Head of caudate nucleus (tissue), 42 donors: ENCODE measurements at regions of chr22 and their contacts with region 1.

Region 1: GRCh38 chr22:28829358-28830181 is 29.2 kb upstream of the XBP1 start:
- DNase-seq: peak; percentile 46 to 92 (median 80)

Region 2: DNA sequence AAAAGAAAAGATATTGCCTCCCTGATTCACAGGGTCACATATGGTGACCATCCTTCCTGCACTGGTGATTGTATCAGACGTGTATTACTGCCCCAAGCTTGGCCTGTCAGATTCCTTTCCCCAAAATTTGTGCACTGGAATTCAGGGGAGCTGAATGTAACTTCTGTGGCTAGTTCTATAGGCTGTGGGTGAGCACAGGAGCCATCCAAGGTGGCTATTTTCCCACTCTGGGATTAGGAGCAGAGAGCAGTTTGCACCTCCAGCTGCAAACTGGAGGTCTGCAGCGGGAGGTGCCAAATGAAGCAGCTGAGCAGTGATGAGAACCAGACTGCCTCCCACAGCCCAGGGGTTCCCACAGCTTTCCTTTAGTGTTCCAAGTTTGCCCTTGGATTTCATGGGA is 786.3 kb before region 1 on chr22:
- intact Hi-C with region 1: loop called (anchors 10 kb)
- DNase-seq: no peak

Region 3: GRCh38 chr22:28252539-28252938 is 577.0 kb before region 1 on chr22:
- intact Hi-C with region 1: no loop called
- DNase-seq: no peak

Region 4: DNA sequence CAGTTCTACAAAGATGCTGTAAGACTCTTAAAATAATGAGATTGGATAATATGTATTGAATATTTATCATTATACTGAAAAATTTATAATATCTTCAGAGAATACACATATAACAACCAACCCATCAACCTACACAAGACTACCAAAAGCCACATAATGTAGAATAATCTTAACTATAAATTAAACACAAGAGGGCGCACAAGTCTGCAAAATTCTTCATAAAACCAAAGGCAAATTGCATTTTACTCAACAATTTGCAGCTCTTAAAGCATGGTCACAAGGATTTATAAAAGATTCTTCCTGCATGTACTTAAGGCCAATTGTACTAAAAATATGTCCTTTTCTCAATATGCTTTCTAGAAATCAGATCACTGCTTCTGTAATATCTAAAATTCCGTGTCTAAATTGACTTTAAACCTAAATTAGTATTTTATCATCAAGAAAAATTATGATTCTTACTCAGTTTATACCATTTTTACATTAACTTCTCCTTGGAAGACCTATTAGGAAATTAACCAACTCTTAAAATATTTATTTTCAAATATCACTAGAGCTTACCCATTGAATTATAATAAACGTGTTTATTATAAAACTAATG is 228.9 kb before region 1 on chr22:
- intact Hi-C with region 1: loop called (anchors 5 kb)
- DNase-seq: peak in 7 of 42 donors; percentile 8 to 53 (median 15)

Region 5: DNA sequence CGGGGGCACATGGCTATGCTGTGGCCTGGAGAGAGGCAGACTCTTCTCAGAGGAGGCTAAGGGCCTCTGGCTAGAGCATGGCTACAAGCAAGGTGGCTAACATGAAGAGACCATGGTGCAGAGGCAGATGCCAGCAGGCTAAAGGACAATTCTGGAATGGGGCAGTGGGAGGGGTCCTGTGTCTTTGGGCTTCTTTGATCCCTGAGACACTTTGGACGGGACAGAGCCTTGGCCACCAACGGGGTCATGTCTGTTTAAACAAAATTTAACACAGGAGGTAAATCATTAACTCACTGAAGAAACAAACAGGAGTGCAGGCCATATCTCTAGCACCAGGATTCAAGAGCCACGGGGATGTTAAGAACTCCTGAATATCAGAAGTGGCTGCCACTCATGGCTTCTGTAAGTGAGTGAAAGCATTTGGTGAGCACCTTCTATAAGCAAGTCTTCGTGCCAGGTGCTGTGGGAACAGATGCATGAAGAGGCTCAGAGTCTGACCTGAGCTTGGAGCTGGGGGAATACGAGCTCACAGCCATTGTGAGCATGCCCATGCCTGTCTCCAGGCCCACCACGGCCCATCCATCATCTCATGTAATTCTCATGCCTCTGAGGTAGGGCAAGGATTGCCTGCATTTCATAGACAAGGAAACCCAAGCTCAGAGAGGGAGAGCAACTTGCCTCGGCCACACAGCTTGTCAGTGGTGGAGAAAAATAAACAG is 35.5 kb after region 1 on chr22:
- intact Hi-C with region 1: no loop called
- DNase-seq: no peak